Heart right ventricle (tissue), 16 donors: ENCODE measurements at regions of chr5 and their contacts with region 1.

Region 1: DNA sequence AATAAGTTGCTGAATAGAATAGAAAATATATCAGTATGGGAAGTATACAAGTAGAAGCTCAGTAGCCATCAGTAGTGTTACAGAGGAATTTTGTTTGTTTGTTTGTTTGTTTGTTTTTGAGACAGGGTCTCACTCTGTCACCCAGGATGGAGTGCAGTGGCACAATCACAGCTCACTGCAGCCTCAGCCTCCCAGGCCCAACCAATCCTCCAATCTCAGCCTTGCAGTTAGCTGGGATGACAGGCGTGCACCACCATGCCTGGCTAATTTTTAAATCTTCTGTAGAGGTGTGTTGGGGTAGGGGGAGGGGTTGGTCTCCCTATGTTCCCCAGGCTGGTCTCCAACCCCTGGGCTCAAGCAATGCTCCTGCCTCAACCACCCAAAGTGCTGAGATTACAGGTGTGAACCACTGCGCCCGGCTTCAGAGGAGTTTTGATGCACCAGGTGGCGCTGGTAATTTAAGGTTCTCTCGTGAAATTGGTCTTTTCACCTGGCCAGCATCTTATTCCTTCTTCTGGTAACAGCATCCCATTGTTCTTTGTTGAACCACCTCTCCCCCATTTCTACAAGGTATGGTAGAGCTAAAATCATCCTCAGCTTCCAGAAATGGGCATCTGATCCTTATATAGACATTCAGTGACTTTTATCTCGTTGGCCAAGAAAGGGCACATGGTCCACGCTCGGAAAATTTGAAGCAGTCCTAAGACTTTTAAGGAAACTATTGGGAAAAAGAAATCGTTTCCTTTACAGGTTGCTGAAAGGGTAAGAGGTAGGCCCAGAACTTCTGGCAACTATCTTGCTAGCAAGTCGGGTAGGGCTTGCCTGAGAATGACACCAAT is 157.1 kb downstream of the ARRDC3 start:
- DNase-seq: no peak
- ATAC-seq: peak in 3 of 8 donors; percentile 16 to 46 (median 26)
- H3K4me3 ChIP-seq: no peak overlapping the region
- H3K27ac ChIP-seq: no peak overlapping the region
- H3K4me1 ChIP-seq: peaks cover 0 to 7% (median 0%) of the 10 kb centered on the region in 9 donors
- H3K27me3 ChIP-seq: no peaks in the 10 kb centered on the region
- CTCF ChIP-seq: peak in 8 of 9 donors; percentile 9 to 54 (median 38)

Region 2: DNA sequence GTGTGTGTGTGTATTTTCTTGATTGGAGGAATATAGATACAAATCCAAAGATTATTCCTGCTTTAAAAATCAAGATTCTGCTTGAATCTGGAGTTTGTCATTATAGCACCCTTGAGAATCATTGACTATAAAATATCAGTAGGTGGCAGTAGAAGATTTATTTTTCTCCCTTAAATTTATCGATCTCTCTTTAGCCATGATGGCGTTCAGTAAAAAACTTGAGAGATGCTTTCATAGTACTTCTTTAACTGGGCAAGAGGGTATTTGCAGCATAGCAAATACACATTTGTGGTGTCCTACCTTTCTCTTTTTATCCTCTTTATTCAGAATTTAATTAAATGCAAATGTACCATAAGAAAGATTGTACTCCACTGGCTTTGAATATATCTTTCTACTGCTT is 359.7 kb before region 1 on chr5:
- intact Hi-C with region 1: loop called in 1 of 10 experiments (anchors 10 kb)
- DNase-seq: no peak
- ATAC-seq: peak in 4 of 8 donors; percentile 46 to 63 (median 61)
- H3K4me3 ChIP-seq: no peak overlapping the region
- H3K27ac ChIP-seq: no peak overlapping the region
- H3K4me1 ChIP-seq: peaks cover 0 to 20% (median 11%) of the 10 kb centered on the region in 9 donors
- H3K27me3 ChIP-seq: no peaks in the 10 kb centered on the region
- CTCF ChIP-seq: peak; percentile 28 to 70 (median 59)

Region 3: GRCh38 chr5:91280362-91281269 is 54.5 kb after region 1 on chr5:
- intact Hi-C with region 1: loop called in 1 of 10 experiments (anchors 5 kb)
- DNase-seq: peak; percentile 94
- ATAC-seq: peak; percentile 97 to 99 (median 98)
- H3K4me3 ChIP-seq: peak overlapping the region; percentile 32 to 69 (median 56)
- H3K27ac ChIP-seq: peak overlapping the region; percentile 78 to 95 (median 93)
- H3K4me1 ChIP-seq: peaks cover 0 to 34% (median 8%) of the 10 kb centered on the region in 9 donors
- H3K27me3 ChIP-seq: no peaks in the 10 kb centered on the region
- CTCF ChIP-seq: peak in 2 of 9 donors; percentile 20 to 25